ENCODE measurements at regions of chr5 and their contacts with region 1.

Region 1: GRCh38 chr5:43484106-43484849 is 613 bp upstream of the TMEM267 start:
- DNase-seq: peak; percentile 75 to 91 (median 82)
- ATAC-seq: peak; percentile 73 to 77 (median 76)
- H3K4me3 ChIP-seq: peak overlapping the region; percentile 62 to 88
- H3K4me3 Mint-ChIP-seq: peak overlapping the region; percentile 89 to 99 (median 95)
- H3K27ac ChIP-seq: peak overlapping the region; percentile 93
- H3K27ac Mint-ChIP-seq: peak overlapping the region; percentile 100
- H3K4me1 ChIP-seq: peaks cover 9 to 25% of the 10 kb centered on the region in 2 experiments
- H3K4me1 Mint-ChIP-seq: peaks cover 50 to 55% (median 53%) of the 10 kb centered on the region in 3 donors
- H3K27me3 ChIP-seq: no peaks in the 10 kb centered on the region
- H3K27me3 Mint-ChIP-seq: no peaks in the 10 kb centered on the region

Region 2: DNA sequence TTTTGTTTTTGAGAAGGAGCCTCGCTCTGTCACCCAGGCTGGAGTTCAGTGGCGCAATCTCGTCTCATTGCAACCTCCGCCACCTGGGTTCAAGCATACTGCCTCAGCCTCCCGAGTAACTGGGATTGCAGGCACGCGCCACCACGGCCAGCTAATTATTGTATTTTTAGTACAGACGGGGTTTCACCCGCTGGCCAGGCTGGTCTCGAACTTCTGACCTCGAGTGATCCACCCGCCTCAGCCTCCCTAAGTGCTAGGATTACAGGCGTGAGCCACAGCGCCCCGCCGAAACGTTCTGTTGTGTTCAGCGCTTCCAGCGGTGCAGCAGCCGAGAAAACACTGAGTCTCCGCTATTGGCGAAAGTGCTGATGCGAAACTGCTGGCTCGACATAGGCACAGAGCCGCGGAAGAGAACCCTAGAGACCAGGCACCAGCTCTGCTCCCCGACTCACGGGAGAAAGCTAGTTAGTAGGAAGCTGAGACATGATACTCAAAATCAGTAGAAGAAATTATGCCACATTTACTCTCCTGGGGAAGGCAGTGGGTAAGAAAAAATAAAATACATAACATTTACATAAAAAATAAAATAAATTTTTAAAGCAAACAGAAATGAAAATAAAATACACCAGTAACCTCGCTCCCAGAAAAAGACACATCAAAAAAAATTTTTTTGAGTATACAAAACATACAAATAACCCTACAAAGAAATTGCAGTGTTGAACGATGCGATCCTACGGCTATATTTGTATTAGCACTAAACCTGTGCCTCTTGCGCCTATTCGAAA is 475.7 kb before region 1 on chr5:
- CTCF ChIA-PET with region 1: interaction called, 3 to 11 read pairs
- POLR2A ChIA-PET with region 1: no interaction called
- DNase-seq: peak; percentile 83 to 97 (median 90)
- ATAC-seq: peak; percentile 65 to 72 (median 71)
- H3K4me3 ChIP-seq: peak overlapping the region; percentile 54 to 97
- H3K4me3 Mint-ChIP-seq: peak overlapping the region; percentile 85 to 87 (median 85)
- H3K27ac ChIP-seq: peak overlapping the region; percentile 87
- H3K27ac Mint-ChIP-seq: peak overlapping the region; percentile 96 to 99
- H3K4me1 ChIP-seq: peaks cover 22 to 34% of the 10 kb centered on the region in 2 experiments
- H3K4me1 Mint-ChIP-seq: peaks cover 40 to 51% (median 42%) of the 10 kb centered on the region in 3 donors
- H3K27me3 ChIP-seq: no peaks in the 10 kb centered on the region
- H3K27me3 Mint-ChIP-seq: no peaks in the 10 kb centered on the region

Region 3: DNA sequence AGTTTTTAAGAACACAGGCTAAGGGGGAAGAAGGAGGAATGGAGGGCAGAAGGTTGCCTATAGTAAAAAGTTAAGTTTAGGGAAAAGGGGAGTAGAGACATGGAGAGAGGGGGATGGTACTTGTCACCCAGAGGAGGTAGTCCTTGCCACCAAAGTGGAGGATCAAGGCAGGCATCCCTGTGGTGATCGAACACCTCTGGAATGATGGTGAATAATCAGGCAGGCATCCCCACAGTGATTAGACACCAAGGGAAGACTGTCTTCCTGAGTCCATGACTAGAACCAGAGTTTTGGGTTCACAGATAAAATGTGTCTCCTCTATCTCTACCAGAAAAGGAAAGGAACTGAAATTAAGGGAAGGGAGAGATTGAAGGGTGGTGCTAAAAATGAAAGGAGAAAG is 151.9 kb before region 1 on chr5:
- CTCF ChIA-PET with region 1: no interaction called
- POLR2A ChIA-PET with region 1: no interaction called
- DNase-seq: no peak
- ATAC-seq: no peak
- H3K4me3 ChIP-seq: no peak overlapping the region
- H3K4me3 Mint-ChIP-seq: no peak overlapping the region
- H3K27ac ChIP-seq: no peak overlapping the region
- H3K27ac Mint-ChIP-seq: no peak overlapping the region
- H3K4me1 ChIP-seq: no peaks in the 10 kb centered on the region
- H3K4me1 Mint-ChIP-seq: no peaks in the 10 kb centered on the region
- H3K27me3 ChIP-seq: peaks cover 0 to 2% of the 10 kb centered on the region in 2 experiments
- H3K27me3 Mint-ChIP-seq: peaks cover 25 to 29% of the 10 kb centered on the region in 2 donors

Region 4: GRCh38 chr5:43389679-43390329 is 94.5 kb before region 1 on chr5:
- CTCF ChIA-PET with region 1: interaction called, 8 to 14 read pairs
- POLR2A ChIA-PET with region 1: interaction called in 1 of 2 experiments, 3 read pairs
- DNase-seq: peak in 25 of 35 experiments; percentile 1 to 75 (median 23)
- ATAC-seq: peak; percentile 66 to 81 (median 78)
- H3K4me3 ChIP-seq: no peak overlapping the region
- H3K4me3 Mint-ChIP-seq: no peak overlapping the region
- H3K27ac ChIP-seq: no peak overlapping the region
- H3K27ac Mint-ChIP-seq: peak overlapping the region; percentile 9 to 40
- H3K4me1 ChIP-seq: no peaks in the 10 kb centered on the region
- H3K4me1 Mint-ChIP-seq: peaks cover 20 to 35% (median 25%) of the 10 kb centered on the region in 3 donors
- H3K27me3 ChIP-seq: no peaks in the 10 kb centered on the region
- H3K27me3 Mint-ChIP-seq: no peaks in the 10 kb centered on the region

Region 5: GRCh38 chr5:43409809-43410271 is 74.4 kb before region 1 on chr5:
- CTCF ChIA-PET with region 1: no interaction called
- POLR2A ChIA-PET with region 1: interaction called, 4 to 13 read pairs
- DNase-seq: no peak
- ATAC-seq: no peak
- H3K4me3 ChIP-seq: no peak overlapping the region
- H3K4me3 Mint-ChIP-seq: no peak overlapping the region
- H3K27ac ChIP-seq: no peak overlapping the region
- H3K27ac Mint-ChIP-seq: no peak overlapping the region
- H3K4me1 ChIP-seq: no peaks in the 10 kb centered on the region
- H3K4me1 Mint-ChIP-seq: no peaks in the 10 kb centered on the region
- H3K27me3 ChIP-seq: no peaks in the 10 kb centered on the region
- H3K27me3 Mint-ChIP-seq: no peaks in the 10 kb centered on the region

Region 6: GRCh38 chr5:43602461-43603343 is 118.4 kb after region 1 on chr5 and contains the start of gene NNT:
- CTCF ChIA-PET with region 1: interaction called in 1 of 2 experiments, 12 read pairs
- POLR2A ChIA-PET with region 1: interaction called, 4 to 5 read pairs
- DNase-seq: peak; percentile 52 to 86 (median 72)
- ATAC-seq: peak; percentile 85 to 89 (median 86)
- H3K4me3 ChIP-seq: peak within 1 kb of the TSS; percentile 87 to 91
- H3K4me3 Mint-ChIP-seq: peak within 1 kb of the TSS; percentile 89 to 96 (median 91)
- H3K27ac ChIP-seq: peak within 1 kb of the TSS; percentile 83
- H3K27ac Mint-ChIP-seq: peak within 1 kb of the TSS; percentile 88 to 95
- H3K4me1 ChIP-seq: peaks cover 8 to 23% of the 10 kb centered on the region in 2 experiments
- H3K4me1 Mint-ChIP-seq: peaks cover 59 to 71% (median 62%) of the 10 kb centered on the region in 3 donors
- H3K27me3 ChIP-seq: no peaks in the 10 kb centered on the region
- H3K27me3 Mint-ChIP-seq: no peaks in the 10 kb centered on the region
- total RNA-seq, gene NNT: 49.3 to 56.3 (median 52.6) TPM

Region 7: GRCh38 chr5:43802119-43802518 is 317.8 kb after region 1 on chr5:
- CTCF ChIA-PET with region 1: no interaction called
- POLR2A ChIA-PET with region 1: no interaction called
- DNase-seq: no peak
- ATAC-seq: no peak
- H3K4me3 ChIP-seq: no peak overlapping the region
- H3K4me3 Mint-ChIP-seq: no peak overlapping the region
- H3K27ac ChIP-seq: no peak overlapping the region
- H3K27ac Mint-ChIP-seq: no peak overlapping the region
- H3K4me1 ChIP-seq: no peaks in the 10 kb centered on the region
- H3K4me1 Mint-ChIP-seq: no peaks in the 10 kb centered on the region
- H3K27me3 ChIP-seq: no peaks in the 10 kb centered on the region
- H3K27me3 Mint-ChIP-seq: no peaks in the 10 kb centered on the region